ENCODE measurements at regions of chr1 and their contacts with region 1.

Region 1: DNA sequence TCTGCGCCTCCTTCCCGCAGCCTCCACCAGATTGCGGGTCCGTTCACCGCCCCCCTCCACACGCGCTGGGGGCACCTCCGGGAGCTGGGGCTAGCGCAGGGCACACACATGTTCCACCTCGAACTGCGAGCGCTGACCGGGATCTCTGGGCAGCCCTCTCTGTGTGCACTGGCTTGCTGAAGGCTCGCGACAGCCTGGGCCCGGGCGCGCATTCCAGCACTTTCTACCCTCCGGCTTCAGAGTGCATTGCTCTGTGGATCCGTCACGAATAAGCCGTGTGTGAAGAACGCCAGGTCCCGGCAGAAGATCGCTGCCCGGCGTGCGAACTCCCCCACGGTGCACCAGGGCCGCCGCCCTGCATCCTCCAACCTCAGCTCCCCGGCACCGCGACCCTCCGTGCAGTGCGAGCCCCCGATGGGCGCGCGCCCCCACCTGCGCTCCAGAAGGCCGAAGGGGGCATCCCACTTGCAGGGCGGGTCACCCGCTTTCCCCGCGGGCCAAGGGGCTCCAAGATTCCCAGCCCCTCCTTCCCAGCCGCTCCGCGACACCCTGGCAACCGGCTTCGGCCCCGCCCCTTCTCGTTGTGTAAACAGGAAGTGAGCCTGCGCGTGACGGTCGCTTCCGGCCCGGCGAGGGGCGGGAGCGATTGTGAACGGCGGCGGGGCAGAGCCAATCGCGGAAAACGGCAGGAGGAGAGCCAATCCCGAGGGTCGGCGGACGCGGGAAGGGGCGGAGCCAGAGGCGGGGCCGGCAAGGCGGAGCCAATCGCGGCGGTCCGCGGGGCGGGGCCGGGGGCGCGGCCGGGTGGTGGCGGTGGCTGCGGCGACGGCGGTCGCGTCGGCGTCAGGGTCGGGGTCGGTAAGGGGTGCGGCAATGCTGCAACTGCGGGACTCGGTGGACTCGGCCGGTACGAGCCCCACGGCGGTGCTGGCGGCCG is at the start of gene TPRG1L:
- DNase-seq: peak; percentile 97 to 100 (median 99)
- ATAC-seq: peak; percentile 98
- H3K4me3 ChIP-seq: peak within 1 kb of the TSS; percentile 95
- H3K4me3 Mint-ChIP-seq: peak within 1 kb of the TSS; percentile 91 to 99 (median 96)
- H3K27ac ChIP-seq: peak within 1 kb of the TSS; percentile 78
- H3K27ac Mint-ChIP-seq: peak within 1 kb of the TSS; percentile 92 to 98 (median 96)
- H3K4me1 ChIP-seq: peaks cover 22% of the 10 kb centered on the region in 2 donors
- H3K4me1 Mint-ChIP-seq: peaks cover 27 to 57% (median 42%) of the 10 kb centered on the region in 7 donors
- H3K27me3 ChIP-seq: no peaks in the 10 kb centered on the region
- H3K27me3 Mint-ChIP-seq: peaks cover 0 to 13% (median 0%) of the 10 kb centered on the region in 5 donors
- total RNA-seq, gene TPRG1L: 15.6 to 61.4 (median 37.8) TPM

Region 2: GRCh38 chr1:3586932-3587678 is 37.4 kb before region 1 on chr1:
- CTCF ChIA-PET with region 1: interaction called, 3 read pairs
- POLR2A ChIA-PET with region 1: no interaction called
- intact Hi-C with region 1: loop called in 1 of 2 experiments (anchors 5 kb)
- DNase-seq: no peak
- ATAC-seq: no peak
- H3K4me3 ChIP-seq: no peak overlapping the region
- H3K4me3 Mint-ChIP-seq: no peak overlapping the region
- H3K27ac ChIP-seq: no peak overlapping the region
- H3K27ac Mint-ChIP-seq: no peak overlapping the region
- H3K4me1 ChIP-seq: no peaks in the 10 kb centered on the region
- H3K4me1 Mint-ChIP-seq: no peaks in the 10 kb centered on the region
- H3K27me3 ChIP-seq: no peaks in the 10 kb centered on the region
- H3K27me3 Mint-ChIP-seq: no peaks in the 10 kb centered on the region

Region 3: DNA sequence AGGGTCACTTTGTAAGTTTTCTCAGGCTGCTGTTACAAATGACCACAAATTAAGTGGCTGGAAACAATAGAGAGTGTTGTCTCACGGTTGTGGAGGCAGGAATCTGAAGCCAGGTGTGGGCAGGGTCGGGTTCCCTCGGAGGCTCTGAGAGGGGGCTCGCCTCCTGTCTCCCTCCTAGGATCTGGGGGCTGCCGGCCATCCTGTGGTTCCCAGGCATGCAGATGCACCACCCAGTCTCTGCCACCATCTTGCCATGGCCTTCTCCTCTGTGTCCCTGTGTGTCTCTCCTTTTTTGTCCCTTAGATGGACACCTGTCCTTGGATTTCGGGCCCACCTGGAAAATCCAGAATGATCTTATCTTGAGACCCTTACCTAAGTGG is 32.6 kb after region 1 on chr1:
- CTCF ChIA-PET with region 1: no interaction called
- POLR2A ChIA-PET with region 1: no interaction called
- intact Hi-C with region 1: no loop called
- DNase-seq: no peak
- ATAC-seq: no peak
- H3K4me3 ChIP-seq: no peak overlapping the region
- H3K4me3 Mint-ChIP-seq: no peak overlapping the region
- H3K27ac ChIP-seq: no peak overlapping the region
- H3K27ac Mint-ChIP-seq: no peak overlapping the region
- H3K4me1 ChIP-seq: no peaks in the 10 kb centered on the region
- H3K4me1 Mint-ChIP-seq: peaks cover 0 to 4% (median 0%) of the 10 kb centered on the region in 7 donors
- H3K27me3 ChIP-seq: peaks cover 3 to 9% of the 10 kb centered on the region in 2 donors
- H3K27me3 Mint-ChIP-seq: peaks cover 33 to 50% (median 40%) of the 10 kb centered on the region in 5 donors

Region 4: GRCh38 chr1:3746830-3747521 is 122.5 kb after region 1 on chr1:
- CTCF ChIA-PET with region 1: no interaction called
- POLR2A ChIA-PET with region 1: no interaction called
- intact Hi-C with region 1: loop called (anchors 1 kb)
- DNase-seq: peak; percentile 76 to 91 (median 86)
- ATAC-seq: peak; percentile 99
- H3K4me3 ChIP-seq: peak overlapping the region; percentile 52
- H3K4me3 Mint-ChIP-seq: peak overlapping the region; percentile 72 to 87 (median 78)
- H3K27ac ChIP-seq: peak overlapping the region; percentile 71
- H3K27ac Mint-ChIP-seq: peak overlapping the region in 4 of 9 donors; percentile 65 to 88 (median 73)
- H3K4me1 ChIP-seq: peaks cover 7 to 12% of the 10 kb centered on the region in 2 donors
- H3K4me1 Mint-ChIP-seq: peaks cover 15 to 40% (median 33%) of the 10 kb centered on the region in 7 donors
- H3K27me3 ChIP-seq: no peaks in the 10 kb centered on the region
- H3K27me3 Mint-ChIP-seq: peaks cover 0 to 4% (median 0%) of the 10 kb centered on the region in 5 donors

Region 5: DNA sequence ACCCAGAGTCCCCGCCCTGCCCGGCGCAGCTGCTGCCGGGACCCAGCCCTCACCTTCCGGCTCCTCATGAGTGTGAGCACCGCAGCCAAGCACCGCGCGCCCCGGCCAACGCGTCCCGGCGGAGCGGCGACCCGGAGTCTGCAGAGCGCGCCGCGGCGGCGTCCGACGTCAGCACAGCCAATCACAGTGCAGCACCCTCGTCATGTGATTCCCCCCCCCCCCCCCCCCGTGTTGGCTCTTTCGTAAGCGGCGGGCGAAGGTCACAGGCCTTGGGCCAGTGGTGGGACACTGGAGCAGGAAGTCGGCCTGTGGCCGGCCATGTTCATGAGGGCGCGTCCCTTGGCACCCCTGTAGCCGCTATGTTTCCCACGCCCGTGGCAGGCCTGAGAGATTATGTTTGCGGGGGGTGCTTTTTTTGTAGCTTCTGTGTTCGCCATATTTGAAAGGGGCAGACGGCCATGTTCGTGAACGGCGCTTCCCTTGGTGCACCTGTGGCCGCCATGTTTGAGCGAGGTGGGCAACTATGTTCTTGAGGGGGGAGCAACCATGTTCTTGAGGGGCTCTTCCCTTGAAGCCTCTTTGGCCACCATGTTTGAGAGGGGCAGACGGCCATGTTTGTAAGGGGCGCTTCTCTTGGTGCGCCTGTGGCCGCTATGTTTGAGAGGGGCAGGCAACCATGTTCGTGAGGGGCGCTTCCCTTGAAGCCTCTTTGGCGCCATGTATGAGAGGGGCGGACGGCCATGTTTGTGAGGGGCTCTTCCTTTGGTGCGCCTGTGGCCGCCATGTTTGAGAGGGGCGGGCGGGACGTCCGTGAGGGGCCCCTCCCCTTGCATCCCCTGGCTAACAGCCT is 275.9 kb after region 1 on chr1 and contains the start of gene C1orf174:
- CTCF ChIA-PET with region 1: no interaction called
- POLR2A ChIA-PET with region 1: no interaction called
- intact Hi-C with region 1: loop called (anchors 1 kb)
- DNase-seq: peak; percentile 78 to 99 (median 96)
- ATAC-seq: peak; percentile 88
- H3K4me3 ChIP-seq: peak within 1 kb of the TSS; percentile 79
- H3K4me3 Mint-ChIP-seq: peak within 1 kb of the TSS; percentile 90 to 96 (median 94)
- H3K27ac ChIP-seq: peak within 1 kb of the TSS; percentile 94
- H3K27ac Mint-ChIP-seq: peak within 1 kb of the TSS; percentile 92 to 99 (median 96)
- H3K4me1 ChIP-seq: peaks cover 6 to 39% of the 10 kb centered on the region in 2 donors
- H3K4me1 Mint-ChIP-seq: peaks cover 23 to 71% (median 53%) of the 10 kb centered on the region in 7 donors
- H3K27me3 ChIP-seq: no peaks in the 10 kb centered on the region
- H3K27me3 Mint-ChIP-seq: no peaks in the 10 kb centered on the region
- total RNA-seq, gene C1orf174: 17.0 to 33.6 (median 27.1) TPM

Measured in naive thymus-derived CD4-positive, alpha-beta T cell (primary cell).